K562 (cell line): ENCODE measurements at regions of chr7 and their contacts with region 1.

Region 1: DNA sequence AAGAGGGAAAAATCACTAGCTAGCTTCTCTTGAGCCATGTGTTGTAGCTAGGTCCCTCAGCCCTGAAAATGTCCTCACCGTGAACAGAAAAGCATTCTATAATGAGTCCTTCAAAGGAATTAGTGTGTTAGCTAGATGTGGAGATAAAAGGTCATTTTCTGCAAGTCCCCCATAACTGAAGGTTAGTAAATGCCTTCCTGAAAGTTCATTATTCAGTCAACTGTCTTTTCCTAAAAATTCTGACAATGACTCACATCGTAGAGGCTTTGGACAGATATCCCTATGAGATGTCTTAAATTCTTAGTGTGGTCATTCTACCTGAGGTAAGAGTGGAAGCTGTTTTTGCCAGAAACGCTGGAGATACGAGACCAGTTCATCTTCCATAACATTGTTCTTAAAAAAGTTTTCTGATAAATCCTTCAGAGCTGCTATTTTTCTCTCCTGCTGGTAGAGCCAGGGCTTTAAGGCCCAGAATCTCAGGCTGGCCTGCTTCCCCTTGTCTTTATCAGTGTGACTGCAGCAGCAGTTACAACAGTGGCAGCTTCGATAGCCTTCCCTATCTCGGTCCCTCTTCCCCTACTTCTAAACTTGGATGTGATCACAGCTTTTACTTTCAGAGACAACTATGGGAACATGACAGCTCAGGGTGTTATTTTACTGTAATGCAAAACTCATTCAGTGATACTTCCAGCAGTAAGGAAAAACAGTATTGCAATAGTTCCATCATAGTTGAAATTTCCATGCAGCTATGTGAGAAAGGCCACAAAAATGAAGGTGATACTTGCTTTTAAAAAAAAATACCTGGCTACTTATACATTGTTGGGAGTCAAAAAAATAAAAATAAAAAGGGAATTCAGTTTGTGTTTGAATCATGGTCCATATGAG is 37.3 kb upstream of the PRKAR2B start:
- DNase-seq: peak; percentile 87 to 99 (median 91)
- ATAC-seq: peak; percentile 85
- H3K4me3 ChIP-seq: peak overlapping the region; percentile 39
- H3K27ac ChIP-seq: peak overlapping the region; percentile 96
- H3K4me1 ChIP-seq: peaks cover 37 to 44% of the 10 kb centered on the region in 2 experiments
- H3K27me3 ChIP-seq: no peaks in the 10 kb centered on the region
- CTCF ChIP-seq: peak in 2 of 3 experiments; percentile 12 to 30; a peak in 2 of 6 replicates
- EP300 ChIP-seq: peak; percentile 99
- POLR2A ChIP-seq: peak; percentile 68
- RAD21 ChIP-seq: peak; percentile 50 to 57

Region 2: GRCh38 chr7:106952658-106953231 is 54.5 kb before region 1 on chr7:
- CTCF ChIA-PET with region 1: no interaction called
- POLR2A ChIA-PET with region 1: interaction called, 6 read pairs
- in situ Hi-C with region 1: no loop called
- intact Hi-C with region 1: loop called (anchors 1 kb)
- DNase-seq: peak; percentile 66 to 95 (median 78)
- ATAC-seq: peak; percentile 92
- H3K4me3 ChIP-seq: no peak overlapping the region
- H3K27ac ChIP-seq: peak overlapping the region; percentile 45
- H3K4me1 ChIP-seq: peaks cover 19 to 34% of the 10 kb centered on the region in 2 experiments
- H3K27me3 ChIP-seq: no peaks in the 10 kb centered on the region
- CTCF ChIP-seq: no peak
- EP300 ChIP-seq: peak; percentile 84
- POLR2A ChIP-seq: no peak
- RAD21 ChIP-seq: peak; percentile 24 to 46

Region 3: DNA sequence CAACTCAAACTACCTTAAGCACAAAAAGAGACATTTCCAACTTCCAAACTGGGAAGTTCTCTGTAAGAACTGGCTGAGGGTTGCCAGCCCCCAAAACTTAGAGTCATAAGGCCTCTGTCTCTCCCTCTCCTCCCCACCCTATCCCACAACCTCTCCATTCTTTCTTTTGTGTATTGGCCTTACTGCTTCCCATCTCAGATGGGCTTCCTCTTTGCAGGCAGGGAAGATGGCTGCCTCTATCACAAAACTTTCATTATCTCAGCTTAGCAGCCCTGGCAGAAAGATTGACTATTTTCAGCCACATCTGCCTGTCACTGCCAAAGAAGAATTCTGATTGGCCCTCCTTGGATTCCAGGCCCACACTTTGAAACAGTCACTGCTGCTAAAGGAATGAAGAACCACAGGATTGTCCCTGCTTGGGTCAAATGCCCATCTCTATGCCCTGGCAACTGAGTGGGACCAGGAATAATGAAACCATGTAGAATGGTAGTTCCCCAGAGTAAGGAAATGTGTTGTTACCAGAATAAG is 20.7 kb before region 1 on chr7:
- CTCF ChIA-PET with region 1: no interaction called
- POLR2A ChIA-PET with region 1: interaction called, 53 read pairs
- in situ Hi-C with region 1: no loop called
- intact Hi-C with region 1: loop called (anchors 1 kb)
- DNase-seq: peak; percentile 81 to 94 (median 88)
- ATAC-seq: peak; percentile 82
- H3K4me3 ChIP-seq: no peak overlapping the region
- H3K27ac ChIP-seq: peak overlapping the region; percentile 79
- H3K4me1 ChIP-seq: peaks cover 37 to 63% of the 10 kb centered on the region in 2 experiments
- H3K27me3 ChIP-seq: no peaks in the 10 kb centered on the region
- CTCF ChIP-seq: no peak
- EP300 ChIP-seq: peak; percentile 78
- POLR2A ChIP-seq: no peak
- RAD21 ChIP-seq: peak in 1 of 2 experiments; percentile 17; a peak in 2 of 4 replicates

Region 4: GRCh38 chr7:107035446-107035845 is 28.2 kb after region 1 on chr7:
- CTCF ChIA-PET with region 1: no interaction called
- POLR2A ChIA-PET with region 1: interaction called, 11 read pairs
- in situ Hi-C with region 1: no loop called
- intact Hi-C with region 1: no loop called
- DNase-seq: peak; percentile 89 to 94 (median 91)
- ATAC-seq: peak; percentile 86
- H3K4me3 ChIP-seq: no peak overlapping the region
- H3K27ac ChIP-seq: peak overlapping the region; percentile 47; the same call in 1 of the 3 replicates
- H3K4me1 ChIP-seq: peaks cover 21 to 71% of the 10 kb centered on the region in 2 experiments
- H3K27me3 ChIP-seq: no peaks in the 10 kb centered on the region
- CTCF ChIP-seq: no peak
- EP300 ChIP-seq: peak; percentile 88
- POLR2A ChIP-seq: no peak
- RAD21 ChIP-seq: peak; percentile 35 to 36

Region 5: DNA sequence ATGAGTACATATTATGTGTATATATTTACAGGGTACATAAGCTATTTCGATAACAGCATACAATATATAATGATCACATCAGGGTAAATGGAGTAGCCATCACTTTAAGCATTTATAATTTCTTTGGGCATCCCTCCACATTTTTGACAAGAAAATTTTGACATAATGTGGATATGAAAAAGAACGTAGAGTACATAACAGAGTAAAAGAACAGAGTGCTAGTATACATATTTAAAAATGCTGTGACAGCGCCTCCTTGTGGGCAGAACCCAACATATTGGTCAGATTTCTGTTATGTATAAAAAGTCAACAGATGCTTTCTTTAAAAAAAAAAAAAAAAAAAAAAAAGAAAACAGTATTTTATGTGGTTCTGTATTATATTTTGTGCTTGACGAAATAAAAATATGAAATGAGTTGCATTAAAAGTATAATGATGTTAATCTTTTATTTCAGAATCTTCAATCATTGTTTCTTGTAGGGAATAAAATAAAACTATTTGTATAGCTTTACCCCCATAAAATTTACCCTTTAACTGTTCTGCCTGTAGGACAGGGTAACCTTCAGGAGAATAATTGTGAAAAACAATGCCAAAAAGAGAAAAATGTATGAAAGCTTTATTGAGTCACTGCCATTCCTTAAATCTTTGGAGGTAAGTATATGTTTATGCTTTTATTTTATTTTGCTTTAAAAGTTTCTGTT is 143.3 kb after region 1 on chr7:
- CTCF ChIA-PET with region 1: no interaction called
- POLR2A ChIA-PET with region 1: interaction called, 4 read pairs
- in situ Hi-C with region 1: no loop called
- intact Hi-C with region 1: loop called (anchors 1 kb)
- DNase-seq: peak; percentile 62 to 91 (median 63)
- ATAC-seq: peak; percentile 87
- H3K4me3 ChIP-seq: no peak overlapping the region
- H3K27ac ChIP-seq: peak overlapping the region; percentile 9; the same call in 1 of the 3 replicates
- H3K4me1 ChIP-seq: no peaks in the 10 kb centered on the region
- H3K27me3 ChIP-seq: no peaks in the 10 kb centered on the region
- CTCF ChIP-seq: peak; percentile 64 to 95 (median 67); a peak in 4 of 6 replicates
- EP300 ChIP-seq: no peak
- POLR2A ChIP-seq: no peak
- RAD21 ChIP-seq: peak; percentile 95 to 96

Region 6: GRCh38 chr7:107594961-107595737 is 587.9 kb after region 1 on chr7:
- CTCF ChIA-PET with region 1: no interaction called
- POLR2A ChIA-PET with region 1: no interaction called
- in situ Hi-C with region 1: no loop called
- intact Hi-C with region 1: no loop called
- DNase-seq: no peak
- ATAC-seq: no peak
- H3K4me3 ChIP-seq: no peak overlapping the region
- H3K27ac ChIP-seq: no peak overlapping the region
- H3K4me1 ChIP-seq: no peaks in the 10 kb centered on the region
- H3K27me3 ChIP-seq: no peaks in the 10 kb centered on the region
- CTCF ChIP-seq: no peak
- EP300 ChIP-seq: no peak
- POLR2A ChIP-seq: no peak
- RAD21 ChIP-seq: no peak